Cardiac septum (tissue), 1 donor: ENCODE measurements at regions of chr3 and their contacts with region 1.

Region 1: GRCh38 chr3:171838218-171838761 is 4.9 kb upstream of the TMEM212 start:
- DNase-seq: no peak

Region 2: DNA sequence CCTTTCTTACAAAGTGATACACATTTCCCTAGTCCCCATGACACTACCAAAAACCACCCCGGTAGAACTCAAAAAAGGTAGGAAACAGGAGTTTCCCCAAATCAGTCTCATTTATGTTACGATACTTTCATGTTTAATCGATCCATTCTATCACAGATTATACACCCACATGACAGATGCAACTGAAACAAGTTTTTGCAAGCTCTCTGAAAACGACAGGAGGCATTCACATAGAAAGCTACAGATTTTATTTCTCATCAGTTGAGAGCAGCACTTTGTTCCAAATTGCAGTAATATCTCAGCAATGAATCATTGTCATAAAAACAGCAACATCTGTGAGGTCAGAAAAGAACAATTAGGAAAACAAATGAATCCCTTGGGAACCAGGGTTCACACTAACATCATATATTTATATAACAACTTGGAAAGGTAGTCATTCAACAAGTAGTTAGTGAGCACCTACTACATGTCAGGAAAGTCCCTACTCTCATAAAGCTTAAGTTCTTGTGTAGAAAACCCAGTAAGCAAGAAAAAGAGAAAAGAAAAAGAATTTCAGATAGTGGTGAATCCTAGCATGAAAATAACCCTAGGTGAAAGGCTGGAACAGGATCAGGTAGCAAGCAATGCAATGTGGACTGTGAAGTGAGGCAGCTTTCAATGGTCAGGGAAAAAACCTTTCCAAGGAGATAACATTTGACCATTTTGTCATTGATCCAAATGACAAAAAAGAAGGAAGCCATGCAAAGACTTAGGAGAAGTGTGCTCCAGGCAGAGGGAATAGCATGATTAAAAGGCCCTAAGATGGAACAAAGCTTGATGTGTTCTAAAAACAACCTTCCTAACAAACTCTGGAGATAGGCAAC is 36.3 kb before region 1 on chr3:
- intact Hi-C with region 1: no loop called
- DNase-seq: no peak

Region 3: DNA sequence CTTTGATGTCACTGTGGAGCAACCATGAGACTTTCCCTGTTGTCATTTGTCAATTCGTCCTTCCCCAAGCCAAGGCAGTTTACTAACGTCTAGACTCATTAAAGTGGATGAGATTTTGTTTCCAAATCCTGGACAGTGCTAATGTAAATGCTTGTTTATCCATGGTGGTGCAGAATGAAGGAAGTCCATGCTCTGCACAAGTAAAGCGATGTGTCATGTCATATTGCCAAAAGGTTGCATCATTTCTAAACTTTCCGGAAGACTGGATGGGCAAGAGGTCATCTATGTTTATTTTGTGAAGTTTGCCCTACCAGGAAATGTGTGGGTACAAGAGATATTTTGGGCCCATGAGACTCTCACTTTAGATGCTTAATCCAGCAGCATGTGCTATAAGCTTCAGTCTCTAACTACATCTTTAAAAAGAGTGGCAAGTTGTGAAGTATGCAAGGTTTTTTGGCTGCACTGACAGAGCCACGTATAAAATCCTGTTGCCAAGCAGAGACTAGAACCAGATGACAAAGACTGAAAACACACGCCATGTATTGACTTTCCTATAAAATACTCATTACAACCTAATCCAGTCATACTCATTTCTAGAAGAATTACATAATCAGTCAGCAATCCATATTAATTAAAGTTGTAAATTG is 129.0 kb after region 1 on chr3:
- intact Hi-C with region 1: loop called (anchors 2 kb)
- DNase-seq: no peak